ENCODE measurements at regions of chr3 and their contacts with region 1.

Region 1: GRCh38 chr3:167929968-167930367 is 165.8 kb downstream of the GOLIM4 start:
- DNase-seq: no peak
- ATAC-seq: no peak
- H3K4me3 ChIP-seq: no peak overlapping the region
- H3K27ac ChIP-seq: no peak overlapping the region
- H3K4me1 ChIP-seq: no peaks in the 10 kb centered on the region
- H3K27me3 ChIP-seq: no peaks in the 10 kb centered on the region
- CTCF ChIP-seq: no peak
- POLR2A ChIP-seq: no peak

Region 2: GRCh38 chr3:167830007-167830406 is 100.0 kb before region 1 on chr3:
- in situ Hi-C with region 1: no loop called
- intact Hi-C with region 1: no loop called
- DNase-seq: no peak
- ATAC-seq: no peak
- H3K4me3 ChIP-seq: no peak overlapping the region
- H3K27ac ChIP-seq: no peak overlapping the region
- H3K4me1 ChIP-seq: no peaks in the 10 kb centered on the region
- H3K27me3 ChIP-seq: no peaks in the 10 kb centered on the region
- CTCF ChIP-seq: no peak
- POLR2A ChIP-seq: no peak

Region 3: DNA sequence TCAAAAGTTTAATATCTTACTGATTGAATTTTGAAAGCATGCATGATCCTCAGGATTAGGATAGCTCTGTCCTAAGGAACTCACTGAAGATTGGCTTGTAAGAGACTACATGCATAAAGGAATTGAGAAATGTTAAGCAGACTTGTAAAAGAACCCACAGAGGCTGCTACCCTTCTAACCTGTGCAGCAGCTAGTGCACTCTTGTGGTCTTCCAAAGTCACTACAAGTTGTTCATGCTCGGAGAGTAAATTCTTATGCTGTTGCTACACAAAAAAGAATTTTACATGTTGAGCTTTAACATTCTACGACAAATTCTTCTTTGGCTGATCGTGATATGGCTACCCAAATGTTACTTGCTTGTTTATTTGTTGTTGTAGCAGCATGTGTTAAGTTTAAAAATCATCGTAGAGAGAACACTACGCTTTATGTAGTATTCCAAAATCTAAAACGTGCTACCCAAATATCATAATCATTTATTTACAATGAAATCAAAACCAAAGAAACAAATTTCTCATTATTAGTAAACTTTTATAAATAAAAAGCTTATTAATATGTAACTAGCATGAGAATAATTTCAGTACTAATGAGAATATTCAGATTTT is 110.7 kb after region 1 on chr3:
- in situ Hi-C with region 1: no loop called
- intact Hi-C with region 1: loop called (anchors 1 kb)
- DNase-seq: no peak
- ATAC-seq: peak in 1 of 2 donors; percentile 77
- H3K4me3 ChIP-seq: no peak overlapping the region
- H3K27ac ChIP-seq: no peak overlapping the region
- H3K4me1 ChIP-seq: peaks cover 3 to 15% of the 10 kb centered on the region in 2 donors
- H3K27me3 ChIP-seq: no peaks in the 10 kb centered on the region
- CTCF ChIP-seq: peak; percentile 27 to 63 (median 43)
- POLR2A ChIP-seq: no peak